ENCODE measurements at regions of chr1 and their contacts with region 1.

Region 1: DNA sequence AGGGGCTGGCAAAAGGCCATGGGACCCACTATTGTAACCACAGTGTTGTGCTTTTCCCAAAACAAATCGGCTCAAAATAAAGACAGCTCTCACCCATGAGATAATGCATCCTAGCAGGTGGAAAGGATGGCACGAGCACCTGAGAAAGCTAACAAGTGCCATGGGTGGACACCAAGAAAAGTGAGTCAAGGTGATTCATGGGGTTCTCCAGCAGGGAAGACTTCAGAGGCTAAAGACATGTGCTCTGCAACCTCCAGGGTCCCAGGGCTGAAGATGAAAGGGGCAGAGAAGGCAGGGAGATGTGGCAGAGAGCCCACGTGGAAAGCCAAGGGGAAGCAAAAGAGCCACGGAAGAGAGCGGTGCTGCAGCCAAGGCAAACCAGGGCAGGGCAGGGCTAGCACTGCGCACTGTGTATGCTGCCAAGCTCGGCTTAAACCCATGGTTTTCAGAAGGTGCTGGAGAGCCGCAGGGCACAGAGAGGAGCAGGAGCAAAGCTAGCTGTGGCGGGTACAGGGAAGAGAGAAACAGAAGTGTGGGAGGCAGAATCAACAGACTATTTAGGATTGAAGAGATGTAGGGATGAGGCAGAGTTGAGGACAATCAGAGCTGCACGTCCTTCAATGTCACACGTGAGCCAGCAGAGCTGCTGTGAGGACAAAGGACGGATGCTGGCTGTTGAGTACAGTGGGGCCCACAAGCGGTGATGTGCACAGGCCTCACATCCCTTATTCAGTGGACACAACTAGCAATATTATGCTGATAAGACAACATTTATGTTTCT is 41.8 kb upstream of the C1orf198 start:
- DNase-seq: no peak
- ATAC-seq: no peak; the same call in 2 of the 3 replicates
- H3K4me3 ChIP-seq: no peak overlapping the region
- H3K27ac ChIP-seq: no peak overlapping the region
- H3K4me1 ChIP-seq: no peaks in the 10 kb centered on the region
- H3K27me3 ChIP-seq: no peaks in the 10 kb centered on the region
- CTCF ChIP-seq: no peak
- EP300 ChIP-seq: no peak
- POLR2A ChIP-seq: no peak
- RAD21 ChIP-seq: no peak

Region 2: GRCh38 chr1:230487773-230488428 is 422.3 kb before region 1 on chr1:
- CTCF ChIA-PET with region 1: no interaction called
- POLR2A ChIA-PET with region 1: no interaction called
- in situ Hi-C with region 1: no loop called
- intact Hi-C with region 1: no loop called
- DNase-seq: no peak
- ATAC-seq: no peak
- H3K4me3 ChIP-seq: no peak overlapping the region
- H3K27ac ChIP-seq: no peak overlapping the region
- H3K4me1 ChIP-seq: no peaks in the 10 kb centered on the region
- H3K27me3 ChIP-seq: peaks cover 0 to 16% of the 10 kb centered on the region in 2 experiments; a peak in 3 of 5 replicates
- CTCF ChIP-seq: no peak
- EP300 ChIP-seq: no peak
- POLR2A ChIP-seq: no peak
- RAD21 ChIP-seq: no peak

Region 3: DNA sequence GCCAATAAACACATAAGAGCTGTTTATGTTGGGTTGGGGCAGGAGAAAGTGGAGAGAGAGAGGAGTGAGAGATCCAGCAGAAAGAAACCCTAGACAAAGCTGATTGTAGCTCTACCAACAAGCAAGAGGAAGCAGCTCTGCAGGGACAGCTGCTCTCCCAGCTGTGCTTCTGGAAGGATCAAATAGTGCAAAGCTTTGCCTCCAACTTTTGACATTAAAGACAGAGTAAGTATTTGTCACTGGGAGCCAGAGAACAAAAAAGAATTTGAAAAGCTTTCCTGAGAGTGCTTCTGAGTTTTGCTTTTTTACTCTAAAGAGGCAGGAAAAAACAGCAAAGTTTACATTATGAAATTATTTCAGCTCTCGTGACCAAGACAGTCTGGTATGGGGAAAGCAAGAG is 13.4 kb before region 1 on chr1:
- CTCF ChIA-PET with region 1: no interaction called
- POLR2A ChIA-PET with region 1: interaction called, 17 read pairs
- in situ Hi-C with region 1: no loop called
- intact Hi-C with region 1: no loop called
- DNase-seq: no peak
- ATAC-seq: no peak
- H3K4me3 ChIP-seq: no peak overlapping the region
- H3K27ac ChIP-seq: no peak overlapping the region
- H3K4me1 ChIP-seq: no peaks in the 10 kb centered on the region
- H3K27me3 ChIP-seq: peaks cover 39 to 45% of the 10 kb centered on the region in 2 experiments
- CTCF ChIP-seq: no peak
- EP300 ChIP-seq: no peak
- POLR2A ChIP-seq: no peak
- RAD21 ChIP-seq: no peak

Region 4: DNA sequence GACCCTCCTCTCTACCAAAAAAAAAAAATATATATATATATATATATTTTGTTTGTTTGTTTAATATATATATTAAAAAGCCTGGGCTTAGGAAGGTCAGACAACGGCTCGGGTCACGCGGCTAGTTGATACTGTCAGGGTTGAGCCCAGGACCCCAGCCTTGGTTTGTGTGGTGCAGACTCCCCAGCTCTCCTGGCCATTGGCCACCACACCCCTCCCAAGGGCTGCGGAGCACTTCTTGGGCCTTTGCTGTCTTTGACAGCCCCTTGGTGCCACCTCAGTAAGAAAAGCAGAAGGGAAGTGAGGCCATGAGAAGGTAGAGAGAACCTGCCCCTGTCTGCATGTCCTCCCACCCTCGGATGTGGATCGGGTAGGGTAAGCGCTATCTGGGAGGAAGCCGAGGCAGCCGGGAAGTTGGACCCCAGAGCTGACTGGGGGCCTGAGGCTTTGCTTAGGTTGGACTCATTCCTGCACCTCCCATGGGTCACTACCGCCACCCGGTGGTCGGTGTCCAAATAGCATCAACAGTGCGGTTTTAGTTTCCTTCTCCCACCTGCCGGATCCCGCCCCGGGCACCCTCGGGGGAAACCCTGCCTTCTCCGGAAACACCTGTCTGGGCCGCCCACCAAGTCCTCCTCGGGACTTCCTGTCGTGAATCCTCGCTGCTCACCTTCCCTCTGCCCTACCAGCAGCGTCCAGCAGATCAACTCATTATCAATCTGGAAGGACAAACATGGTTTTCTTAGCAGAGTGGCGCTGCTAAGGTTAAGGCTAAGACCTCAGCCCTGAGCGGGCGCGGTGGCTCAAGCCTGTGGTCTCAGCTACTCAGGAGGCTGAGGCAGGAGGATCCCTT is 301.1 kb after region 1 on chr1:
- CTCF ChIA-PET with region 1: interaction called, 3 read pairs
- POLR2A ChIA-PET with region 1: interaction called, 4 read pairs
- in situ Hi-C with region 1: loop called (anchors 5 kb)
- intact Hi-C with region 1: no loop called
- DNase-seq: peak; percentile 86 to 92 (median 90)
- ATAC-seq: peak; percentile 93
- H3K4me3 ChIP-seq: peak overlapping the region; percentile 32
- H3K27ac ChIP-seq: no peak overlapping the region
- H3K4me1 ChIP-seq: peaks cover 0 to 17% of the 10 kb centered on the region in 2 experiments; a peak in 3 of 5 replicates
- H3K27me3 ChIP-seq: peaks cover 10 to 18% of the 10 kb centered on the region in 2 experiments; a peak in 3 of 5 replicates
- CTCF ChIP-seq: peak; percentile 94 to 98 (median 98)
- EP300 ChIP-seq: no peak
- POLR2A ChIP-seq: no peak
- RAD21 ChIP-seq: peak; percentile 99

Measured in K562 (cell line).